ENCODE measurements at regions of chr5 and their contacts with region 1.

Region 1: DNA sequence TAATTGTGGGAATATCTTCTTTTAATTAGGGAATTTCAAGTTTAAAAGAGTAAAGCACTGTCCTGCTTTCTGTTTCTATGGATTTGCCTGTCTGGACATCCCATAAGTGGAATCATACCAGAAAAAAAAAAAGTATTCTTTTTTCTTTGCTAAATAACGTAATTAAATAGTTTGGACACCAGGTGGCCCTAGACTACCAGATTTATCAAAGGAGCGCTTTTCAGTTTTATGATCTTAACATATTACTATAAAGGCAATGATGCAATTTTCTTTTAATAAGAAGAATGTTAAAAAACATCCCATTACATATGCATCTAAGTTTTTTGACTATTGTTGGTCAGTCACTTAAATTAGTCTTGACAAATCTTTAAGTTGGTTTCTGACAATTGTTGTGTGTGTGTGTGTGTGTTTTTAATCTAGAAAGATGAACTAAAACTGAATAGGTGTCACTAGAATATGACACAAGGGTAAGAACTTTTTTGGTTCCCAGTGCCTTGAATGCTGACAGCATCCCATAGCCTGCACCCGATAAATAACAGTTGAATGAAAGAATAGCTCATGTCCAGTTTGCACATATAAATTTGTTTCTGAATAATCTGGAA is 49.5 kb downstream of the C5orf22 start:
- DNase-seq: no peak
- ATAC-seq: no peak
- H3K4me3 Mint-ChIP-seq: no peak overlapping the region
- H3K27ac Mint-ChIP-seq: no peak overlapping the region
- H3K4me1 Mint-ChIP-seq: no peaks in the 10 kb centered on the region
- H3K27me3 Mint-ChIP-seq: peaks cover 10% of the 10 kb centered on the region

Region 2: GRCh38 chr5:31568302-31568835 is 13.2 kb before region 1 on chr5:
- CTCF ChIA-PET with region 1: no interaction called
- POLR2A ChIA-PET with region 1: no interaction called
- intact Hi-C with region 1: no loop called
- DNase-seq: no peak
- ATAC-seq: no peak
- H3K4me3 Mint-ChIP-seq: no peak overlapping the region
- H3K27ac Mint-ChIP-seq: no peak overlapping the region
- H3K4me1 Mint-ChIP-seq: no peaks in the 10 kb centered on the region
- H3K27me3 Mint-ChIP-seq: no peaks in the 10 kb centered on the region

Region 3: GRCh38 chr5:31664566-31664965 is 83.0 kb after region 1 on chr5:
- CTCF ChIA-PET with region 1: no interaction called
- POLR2A ChIA-PET with region 1: no interaction called
- intact Hi-C with region 1: loop called in 1 of 2 experiments (anchors 5 kb)
- DNase-seq: peak; percentile 31
- ATAC-seq: peak; percentile 49
- H3K4me3 Mint-ChIP-seq: no peak overlapping the region
- H3K27ac Mint-ChIP-seq: no peak overlapping the region
- H3K4me1 Mint-ChIP-seq: no peaks in the 10 kb centered on the region
- H3K27me3 Mint-ChIP-seq: peaks cover 3% of the 10 kb centered on the region

Region 4: GRCh38 chr5:31809050-31809870 is 227.7 kb after region 1 on chr5:
- CTCF ChIA-PET with region 1: interaction called, 6 read pairs
- POLR2A ChIA-PET with region 1: no interaction called
- intact Hi-C with region 1: loop called (anchors 1 kb)
- DNase-seq: peak; percentile 59
- ATAC-seq: no peak
- H3K4me3 Mint-ChIP-seq: no peak overlapping the region
- H3K27ac Mint-ChIP-seq: no peak overlapping the region
- H3K4me1 Mint-ChIP-seq: no peaks in the 10 kb centered on the region
- H3K27me3 Mint-ChIP-seq: peaks cover 2% of the 10 kb centered on the region

Region 5: DNA sequence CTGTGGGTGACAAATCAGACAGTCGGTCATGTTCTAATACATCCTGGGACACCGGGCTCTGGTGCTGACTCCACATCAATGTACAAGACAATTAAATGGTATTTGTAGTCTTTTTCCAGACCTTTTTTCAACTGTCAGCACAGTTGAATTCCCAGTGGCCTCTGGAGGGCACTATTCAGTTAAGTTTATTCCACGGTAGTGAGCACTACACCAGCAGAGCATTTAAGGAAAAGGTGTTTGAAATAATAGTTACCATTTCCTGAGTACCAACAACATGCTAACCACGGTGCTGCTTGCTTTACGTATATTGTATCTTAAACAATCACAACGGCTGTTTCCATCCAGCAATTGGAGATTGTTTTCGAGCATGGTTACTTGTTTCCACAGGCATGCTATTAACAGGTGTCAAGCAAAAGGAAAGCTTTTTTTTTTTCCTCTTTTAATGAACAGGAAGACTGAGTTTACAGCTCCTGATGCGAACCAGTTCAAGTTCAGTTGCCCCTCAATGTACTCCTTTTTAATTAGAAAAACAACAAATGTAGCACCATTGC is 244.0 kb after region 1 on chr5:
- CTCF ChIA-PET with region 1: no interaction called
- POLR2A ChIA-PET with region 1: no interaction called
- intact Hi-C with region 1: loop called in 1 of 2 experiments (anchors 1 kb)
- DNase-seq: peak; percentile 65
- ATAC-seq: peak; percentile 90
- H3K4me3 Mint-ChIP-seq: no peak overlapping the region
- H3K27ac Mint-ChIP-seq: no peak overlapping the region
- H3K4me1 Mint-ChIP-seq: peaks cover 6% of the 10 kb centered on the region
- H3K27me3 Mint-ChIP-seq: peaks cover 3% of the 10 kb centered on the region

Measured in activated CD4-positive, alpha-beta T cell treated with anti-CD3 and anti-CD28 coated beads for 36 hours (primary cell).